ENCODE measurements at regions of chr10 and their contacts with region 1.

Region 1: GRCh38 chr10:60032723-60033122 is 126.4 kb upstream of the CCDC6 start:
- DNase-seq: peak; percentile 67 to 81
- ATAC-seq: peak; percentile 91 to 96
- H3K4me3 ChIP-seq: no peak overlapping the region
- H3K27ac ChIP-seq: peak overlapping the region; percentile 83 to 93 (median 87)
- H3K4me1 ChIP-seq: peaks cover 16 to 24% of the 10 kb centered on the region in 2 donors
- H3K27me3 ChIP-seq: no peaks in the 10 kb centered on the region
- CTCF ChIP-seq: peak; percentile 40 to 65 (median 53)
- POLR2A ChIP-seq: no peak

Region 2: DNA sequence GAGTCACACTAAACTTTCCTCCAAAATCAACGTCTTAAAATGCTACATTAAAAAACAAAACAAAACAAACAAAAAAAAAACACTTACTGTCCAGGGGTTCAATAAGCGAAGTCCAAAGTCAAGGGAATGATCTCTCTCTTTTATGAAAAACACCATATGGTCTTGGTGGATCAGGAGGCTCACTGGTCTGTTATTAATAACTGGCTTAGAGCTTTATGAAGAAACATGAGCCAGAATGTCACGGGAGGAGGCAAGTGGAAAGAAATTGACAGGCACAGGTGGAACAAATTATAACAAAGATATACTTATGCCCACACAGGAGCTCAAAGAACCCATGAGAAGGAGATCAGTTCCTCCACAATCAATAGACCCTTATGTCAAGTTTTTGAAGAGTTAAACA is 279.5 kb before region 1 on chr10 and contains the start of gene MRLN:
- in situ Hi-C with region 1: no loop called
- intact Hi-C with region 1: loop called (anchors 2 kb)
- DNase-seq: peak; percentile 45 to 56
- ATAC-seq: peak; percentile 91 to 95
- H3K4me3 ChIP-seq: peak within 1 kb of the TSS; percentile 40 to 64 (median 63)
- H3K27ac ChIP-seq: peak within 1 kb of the TSS; percentile 84 to 93 (median 89)
- H3K4me1 ChIP-seq: peaks cover 29 to 32% of the 10 kb centered on the region in 2 donors
- H3K27me3 ChIP-seq: no peaks in the 10 kb centered on the region
- CTCF ChIP-seq: no peak
- POLR2A ChIP-seq: peak; percentile 68 to 86
- total RNA-seq, gene MRLN: 67.7 to 352 (median 188) TPM

Region 3: DNA sequence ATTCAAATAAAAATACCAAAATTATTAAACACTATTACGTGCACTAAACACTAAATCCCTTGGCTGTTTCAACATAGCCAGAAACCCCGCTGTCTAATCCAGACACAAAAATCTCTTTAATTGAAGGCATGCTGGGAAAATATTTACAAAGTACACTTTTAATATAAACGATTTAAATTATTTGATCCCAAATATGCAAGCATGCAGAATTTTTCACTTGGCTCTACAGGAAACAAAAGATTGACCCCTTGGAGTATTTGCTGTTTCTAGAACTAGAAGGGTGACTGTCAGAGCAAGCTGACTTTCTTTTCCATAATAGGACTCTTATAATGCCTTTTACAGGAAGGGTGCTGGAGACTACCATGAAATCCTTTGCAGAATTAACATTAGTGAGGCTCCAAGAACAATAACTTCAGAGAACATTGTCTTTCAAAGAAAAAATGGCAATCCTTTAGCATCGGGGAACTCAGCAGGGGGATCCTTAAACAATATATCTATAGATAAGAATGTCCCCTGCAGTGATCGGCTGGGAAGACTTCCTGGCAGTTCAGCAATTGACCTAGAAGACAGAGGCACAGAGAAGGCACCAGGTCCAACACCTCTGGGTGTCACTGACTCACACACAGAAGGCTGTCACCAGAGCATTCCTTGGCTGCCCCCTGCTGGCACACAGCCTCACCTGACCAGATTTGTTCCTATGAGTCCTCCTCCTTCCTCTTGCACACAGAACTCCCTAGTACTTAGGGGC is 223.7 kb before region 1 on chr10:
- in situ Hi-C with region 1: no loop called
- intact Hi-C with region 1: loop called (anchors 2 kb)
- DNase-seq: peak; percentile 82 to 87
- ATAC-seq: peak; percentile 83 to 88
- H3K4me3 ChIP-seq: no peak overlapping the region
- H3K27ac ChIP-seq: peak overlapping the region; percentile 61 to 86 (median 66)
- H3K4me1 ChIP-seq: peaks cover 24 to 33% of the 10 kb centered on the region in 2 donors
- H3K27me3 ChIP-seq: no peaks in the 10 kb centered on the region
- CTCF ChIP-seq: peak; percentile 71 to 85 (median 81)
- POLR2A ChIP-seq: no peak

Region 4: DNA sequence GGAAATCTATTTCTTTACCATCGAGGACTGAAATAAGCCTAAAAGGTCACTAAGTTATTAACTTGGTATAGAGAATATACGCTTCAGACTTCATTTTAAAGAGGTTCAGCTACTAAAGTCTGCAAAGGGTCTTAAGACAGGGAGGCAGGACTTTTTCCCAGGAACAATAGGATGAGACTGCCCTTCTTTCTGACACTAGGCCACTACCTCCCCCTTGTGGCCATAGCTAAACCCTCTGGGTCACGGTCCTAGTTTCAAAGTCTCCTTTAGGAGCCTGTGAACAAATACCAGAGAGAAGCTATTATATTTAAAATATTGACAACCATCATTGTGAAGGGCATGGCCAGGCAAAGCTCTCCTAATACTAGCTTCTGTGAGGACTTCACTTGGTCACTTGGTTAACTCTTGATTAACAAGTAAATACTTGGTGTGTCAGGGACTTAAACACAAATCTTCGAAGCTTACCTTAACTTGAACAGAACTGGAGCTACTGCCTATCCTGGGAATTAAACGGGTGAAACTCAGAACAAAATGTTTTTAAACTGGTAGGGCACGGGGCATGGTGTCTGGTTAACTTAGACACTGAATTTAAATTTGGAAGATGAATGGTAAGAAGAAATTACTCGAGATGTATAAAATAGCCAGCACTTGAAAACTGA is 202.0 kb before region 1 on chr10:
- in situ Hi-C with region 1: no loop called
- intact Hi-C with region 1: loop called (anchors 10 kb)
- DNase-seq: peak in 1 of 2 donors; percentile 31
- ATAC-seq: peak in 1 of 2 donors; percentile 70
- H3K4me3 ChIP-seq: no peak overlapping the region
- H3K27ac ChIP-seq: no peak overlapping the region
- H3K4me1 ChIP-seq: peaks cover 30 to 40% of the 10 kb centered on the region in 2 donors
- H3K27me3 ChIP-seq: no peaks in the 10 kb centered on the region
- CTCF ChIP-seq: peak; percentile 65 to 82 (median 72)
- POLR2A ChIP-seq: no peak

Region 5: DNA sequence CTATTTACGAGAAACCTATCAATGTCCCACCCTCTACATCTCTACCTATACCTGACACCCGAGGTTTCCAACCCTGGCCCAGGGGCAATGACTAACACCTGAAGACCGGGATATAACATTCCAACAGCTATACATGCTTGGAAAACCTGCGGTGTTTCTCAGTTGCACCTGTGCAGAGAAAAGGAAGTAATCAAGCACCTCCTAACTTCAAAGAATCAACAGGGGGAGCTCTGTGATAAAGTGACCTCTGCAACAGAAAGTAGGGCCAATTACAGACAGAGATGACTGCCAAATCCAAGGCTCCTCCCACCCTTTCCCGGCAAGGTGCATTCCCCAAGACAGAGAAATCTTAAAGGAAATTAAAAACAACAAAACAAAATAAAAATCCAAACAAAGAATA is 167.6 kb before region 1 on chr10:
- in situ Hi-C with region 1: loop called in 3 of 4 experiments (anchors 25 kb)
- intact Hi-C with region 1: loop called (anchors 1 kb)
- DNase-seq: peak; percentile 15 to 24
- ATAC-seq: peak; percentile 82 to 93
- H3K4me3 ChIP-seq: no peak overlapping the region
- H3K27ac ChIP-seq: peak overlapping the region; percentile 1 to 61 (median 46)
- H3K4me1 ChIP-seq: peaks cover 11 to 18% of the 10 kb centered on the region in 2 donors
- H3K27me3 ChIP-seq: no peaks in the 10 kb centered on the region
- CTCF ChIP-seq: peak in 2 of 5 experiments; percentile 24 to 26
- POLR2A ChIP-seq: no peak

Region 6: DNA sequence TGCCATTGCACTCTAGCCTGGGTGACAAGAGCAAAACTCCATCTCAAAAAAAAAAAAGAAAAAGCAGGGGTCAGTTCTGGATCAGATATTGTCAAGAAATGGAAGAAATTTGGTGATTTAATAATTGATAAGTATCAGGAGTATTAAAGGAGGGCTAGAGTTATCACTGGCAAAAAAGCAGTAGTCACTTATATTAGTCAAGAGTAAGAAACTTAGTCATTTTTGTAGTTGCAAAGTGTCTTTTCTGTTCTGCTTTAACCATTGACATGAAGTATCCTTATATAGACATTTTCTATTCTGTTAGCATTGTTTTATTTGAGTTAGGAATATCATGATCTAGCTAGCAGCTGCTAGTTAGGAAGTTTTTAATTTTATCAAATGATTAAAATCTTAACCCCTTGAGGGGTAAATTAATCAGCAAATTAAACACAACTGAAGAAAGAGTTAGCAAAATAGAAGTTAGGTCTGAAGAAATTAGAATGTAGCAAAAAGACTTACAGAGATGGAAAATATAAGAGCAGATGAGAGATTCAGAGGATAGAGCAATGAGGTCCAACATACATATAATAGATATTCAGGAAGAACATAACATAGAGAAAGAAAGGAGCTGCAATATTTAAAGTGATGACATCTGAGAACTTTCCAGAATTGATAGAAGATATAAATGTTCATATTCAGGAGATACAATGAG is 119.0 kb before region 1 on chr10:
- in situ Hi-C with region 1: loop called in 1 of 4 experiments (anchors 10 kb)
- intact Hi-C with region 1: no loop called
- DNase-seq: no peak
- ATAC-seq: no peak
- H3K4me3 ChIP-seq: no peak overlapping the region
- H3K27ac ChIP-seq: no peak overlapping the region
- H3K4me1 ChIP-seq: peaks cover 3 to 4% of the 10 kb centered on the region in 2 donors
- H3K27me3 ChIP-seq: no peaks in the 10 kb centered on the region
- CTCF ChIP-seq: no peak
- POLR2A ChIP-seq: no peak

Measured in gastrocnemius medialis (tissue), 4 donors.